CD8-positive, alpha-beta T cell (primary cell): ENCODE measurements at regions of chr2 and their contacts with region 1.

Region 1: DNA sequence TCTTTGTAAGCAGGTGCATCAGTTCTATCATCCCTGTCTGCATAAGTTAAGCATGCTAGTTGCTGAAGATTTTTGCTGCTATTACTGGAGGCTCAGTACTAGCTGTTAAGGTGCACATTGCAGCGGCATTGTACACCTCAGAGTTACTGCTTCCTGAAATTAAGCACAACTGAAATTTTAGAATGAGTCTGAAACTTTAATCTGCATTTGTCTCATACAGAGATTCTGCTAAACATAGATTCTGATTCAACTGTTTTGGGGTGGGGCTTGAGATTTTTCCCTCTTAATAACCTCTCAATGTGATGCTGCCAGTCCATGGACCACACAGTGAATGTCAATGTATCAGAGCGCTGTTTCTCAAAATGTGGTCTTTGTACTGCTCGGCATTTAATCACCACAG is 585.7 kb upstream of the GCFC2 start:
- DNase-seq: no peak
- ATAC-seq: no peak
- H3K4me3 ChIP-seq: no peak overlapping the region
- H3K4me3 Mint-ChIP-seq: no peak overlapping the region
- H3K27ac ChIP-seq: no peak overlapping the region
- H3K27ac Mint-ChIP-seq: no peak overlapping the region
- H3K4me1 ChIP-seq: no peaks in the 10 kb centered on the region
- H3K4me1 Mint-ChIP-seq: no peaks in the 10 kb centered on the region
- H3K27me3 ChIP-seq: no peaks in the 10 kb centered on the region
- H3K27me3 Mint-ChIP-seq: no peaks in the 10 kb centered on the region
- CTCF ChIP-seq: no peak

Region 2: DNA sequence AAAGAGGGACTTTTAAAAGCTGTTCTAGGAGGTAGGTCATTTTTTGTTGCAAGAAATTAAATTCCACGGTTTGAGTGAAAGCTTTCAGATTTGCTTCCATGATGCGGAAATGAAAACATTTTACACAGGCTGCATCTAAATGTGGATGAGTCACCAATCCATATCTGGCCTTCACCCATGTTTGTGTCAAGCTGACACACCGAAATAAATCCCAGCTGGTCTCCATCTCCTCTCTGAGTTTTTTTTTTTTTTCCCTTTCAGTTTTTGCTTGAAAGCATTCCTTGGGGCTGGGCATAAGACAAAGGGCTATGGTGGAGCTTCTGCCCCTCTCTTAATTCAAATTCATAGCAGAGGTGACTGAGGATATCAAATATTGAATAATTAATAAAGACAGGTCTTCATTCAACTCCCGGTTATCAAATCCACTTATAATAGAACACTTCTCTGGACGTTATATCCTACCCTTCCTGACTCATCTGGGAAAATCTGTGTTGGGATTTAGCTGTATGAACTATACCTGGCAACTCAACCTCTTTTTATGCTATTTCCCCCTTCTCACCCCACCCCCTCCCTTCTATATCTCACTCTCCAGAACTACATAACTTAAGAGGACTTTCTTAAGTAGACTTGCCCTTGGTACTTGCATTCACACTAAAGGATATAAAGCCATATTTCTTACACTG is 27.4 kb before region 1 on chr2:
- CTCF ChIA-PET with region 1: no interaction called
- POLR2A ChIA-PET with region 1: no interaction called
- intact Hi-C with region 1: loop called in 1 of 2 experiments (anchors 2 kb)
- DNase-seq: no peak
- ATAC-seq: no peak
- H3K4me3 ChIP-seq: no peak overlapping the region
- H3K4me3 Mint-ChIP-seq: no peak overlapping the region
- H3K27ac ChIP-seq: no peak overlapping the region
- H3K27ac Mint-ChIP-seq: no peak overlapping the region
- H3K4me1 ChIP-seq: no peaks in the 10 kb centered on the region
- H3K4me1 Mint-ChIP-seq: no peaks in the 10 kb centered on the region
- H3K27me3 ChIP-seq: no peaks in the 10 kb centered on the region
- H3K27me3 Mint-ChIP-seq: no peaks in the 10 kb centered on the region
- CTCF ChIP-seq: no peak

Region 3: DNA sequence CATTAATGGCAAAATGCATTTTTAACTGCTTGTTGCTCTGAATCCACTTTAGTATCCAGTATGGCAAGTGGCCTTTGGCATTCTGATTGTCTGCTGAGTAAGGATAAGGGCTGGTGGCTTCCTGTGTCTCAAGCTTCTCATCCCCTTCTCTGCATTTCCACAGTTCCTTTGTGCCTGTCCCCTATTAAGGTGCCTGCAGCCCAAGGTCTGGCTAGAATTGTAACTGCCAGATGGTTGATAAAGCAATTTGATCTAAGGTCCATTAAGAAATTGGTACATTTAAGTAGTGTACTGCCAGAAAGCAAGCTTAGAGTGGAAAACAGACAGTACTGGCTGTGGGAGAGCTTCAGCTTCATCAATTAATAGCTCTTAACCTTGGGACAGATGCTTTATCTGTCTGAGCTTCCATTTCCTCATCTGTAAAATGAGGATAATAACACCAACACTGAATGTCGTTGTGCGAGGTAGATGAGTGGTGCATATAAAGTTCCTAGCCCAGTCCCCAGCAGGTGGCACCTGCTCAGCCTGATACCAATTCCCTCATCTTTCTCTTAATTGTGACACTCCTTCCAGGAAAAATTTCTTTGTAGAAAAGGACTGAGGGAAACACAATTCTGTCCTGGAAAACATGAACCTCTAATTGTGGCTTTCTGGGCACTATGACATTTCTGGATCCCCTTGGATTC is 15.1 kb before region 1 on chr2:
- CTCF ChIA-PET with region 1: no interaction called
- POLR2A ChIA-PET with region 1: no interaction called
- intact Hi-C with region 1: no loop called
- DNase-seq: no peak
- ATAC-seq: no peak
- H3K4me3 ChIP-seq: no peak overlapping the region
- H3K4me3 Mint-ChIP-seq: no peak overlapping the region
- H3K27ac ChIP-seq: no peak overlapping the region
- H3K27ac Mint-ChIP-seq: no peak overlapping the region
- H3K4me1 ChIP-seq: no peaks in the 10 kb centered on the region
- H3K4me1 Mint-ChIP-seq: no peaks in the 10 kb centered on the region
- H3K27me3 ChIP-seq: no peaks in the 10 kb centered on the region
- H3K27me3 Mint-ChIP-seq: no peaks in the 10 kb centered on the region
- CTCF ChIP-seq: no peak